ENCODE measurements at regions of chr12 and their contacts with region 1.

Region 1: DNA sequence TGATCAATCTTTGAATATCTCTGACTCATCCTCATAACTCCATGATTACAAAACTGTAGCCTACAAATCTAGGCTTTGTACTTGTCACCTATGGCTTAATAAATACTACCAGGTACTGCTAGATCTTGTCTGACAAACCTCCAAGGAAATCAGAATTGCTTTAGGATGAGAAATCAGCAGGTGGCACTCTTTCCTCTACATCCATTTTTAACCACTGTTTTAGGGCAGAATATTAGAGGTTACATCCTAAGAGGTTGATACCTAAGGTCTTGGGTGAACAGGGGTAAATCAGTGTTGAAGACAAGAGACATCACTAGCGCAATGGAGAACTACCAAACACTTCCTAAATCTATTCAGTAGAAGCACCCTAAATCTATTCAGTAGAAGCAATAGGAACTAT is 63.1 kb upstream of the SOX5 start:
- DNase-seq: peak; percentile 45
- H3K4me3 ChIP-seq: no peak overlapping the region
- H3K27ac ChIP-seq: no peak overlapping the region
- H3K4me1 ChIP-seq: no peaks in the 10 kb centered on the region
- H3K27me3 ChIP-seq: no peaks in the 10 kb centered on the region
- CTCF ChIP-seq: peak; percentile 45

Region 2: GRCh38 chr12:24728366-24728765 is 715.8 kb after region 1 on chr12:
- CTCF ChIA-PET with region 1: no interaction called
- POLR2A ChIA-PET with region 1: no interaction called
- intact Hi-C with region 1: loop called (anchors 10 kb)
- DNase-seq: peak; percentile 63
- H3K4me3 ChIP-seq: no peak overlapping the region
- H3K27ac ChIP-seq: no peak overlapping the region
- H3K4me1 ChIP-seq: peaks cover 12% of the 10 kb centered on the region
- H3K27me3 ChIP-seq: no peaks in the 10 kb centered on the region
- CTCF ChIP-seq: peak; percentile 81

Measured in A673 (cell line).